ENCODE measurements at regions of chr3 and their contacts with region 1.

Region 1: DNA sequence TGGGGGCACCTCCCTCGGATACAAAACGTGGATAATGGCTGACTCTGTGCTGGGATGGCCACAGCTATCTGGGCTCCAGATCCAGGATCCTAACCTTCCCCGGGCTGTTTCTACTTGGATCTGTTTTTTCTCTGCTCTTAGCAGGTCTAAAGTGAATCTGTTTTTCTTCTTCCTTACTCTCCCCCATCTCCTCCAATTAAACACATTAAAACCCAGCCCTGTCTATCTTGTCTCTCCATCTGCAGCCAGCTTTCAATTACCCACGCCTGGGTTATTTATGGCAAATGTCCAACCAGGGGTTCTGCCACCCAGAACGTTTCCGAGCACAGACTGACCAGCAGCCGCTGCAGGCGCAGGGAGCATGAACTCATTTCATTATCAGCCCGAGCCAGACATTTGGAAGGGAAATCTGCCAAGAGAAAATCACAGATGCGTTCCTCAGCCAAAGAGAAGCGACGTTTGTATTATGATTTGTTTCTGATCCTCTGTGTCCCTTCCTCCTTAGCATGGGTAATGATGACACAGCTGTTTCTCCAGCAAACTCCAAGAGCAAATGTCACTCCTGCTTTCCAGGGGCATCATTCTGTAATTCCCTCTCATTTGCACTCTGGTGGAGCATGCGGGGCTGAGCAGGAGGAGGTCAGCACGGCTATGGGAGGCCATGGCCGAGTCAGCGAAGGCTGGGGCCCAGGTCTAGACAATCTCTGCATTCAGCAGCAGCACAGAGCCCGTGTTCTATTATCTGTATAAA is 42.0 kb downstream of the UMPS start:
- DNase-seq: peak in 4 of 5 donors; percentile 62 to 73 (median 66)
- ATAC-seq: peak; percentile 35 to 60 (median 49)
- H3K4me3 ChIP-seq: no peak overlapping the region
- H3K27ac ChIP-seq: peak overlapping the region; percentile 22 to 76 (median 70)
- H3K4me1 ChIP-seq: peaks cover 14 to 85% (median 59%) of the 10 kb centered on the region in 12 donors
- H3K27me3 ChIP-seq: no peaks in the 10 kb centered on the region
- CTCF ChIP-seq: no peak
- POLR2A ChIP-seq: no peak

Region 2: DNA sequence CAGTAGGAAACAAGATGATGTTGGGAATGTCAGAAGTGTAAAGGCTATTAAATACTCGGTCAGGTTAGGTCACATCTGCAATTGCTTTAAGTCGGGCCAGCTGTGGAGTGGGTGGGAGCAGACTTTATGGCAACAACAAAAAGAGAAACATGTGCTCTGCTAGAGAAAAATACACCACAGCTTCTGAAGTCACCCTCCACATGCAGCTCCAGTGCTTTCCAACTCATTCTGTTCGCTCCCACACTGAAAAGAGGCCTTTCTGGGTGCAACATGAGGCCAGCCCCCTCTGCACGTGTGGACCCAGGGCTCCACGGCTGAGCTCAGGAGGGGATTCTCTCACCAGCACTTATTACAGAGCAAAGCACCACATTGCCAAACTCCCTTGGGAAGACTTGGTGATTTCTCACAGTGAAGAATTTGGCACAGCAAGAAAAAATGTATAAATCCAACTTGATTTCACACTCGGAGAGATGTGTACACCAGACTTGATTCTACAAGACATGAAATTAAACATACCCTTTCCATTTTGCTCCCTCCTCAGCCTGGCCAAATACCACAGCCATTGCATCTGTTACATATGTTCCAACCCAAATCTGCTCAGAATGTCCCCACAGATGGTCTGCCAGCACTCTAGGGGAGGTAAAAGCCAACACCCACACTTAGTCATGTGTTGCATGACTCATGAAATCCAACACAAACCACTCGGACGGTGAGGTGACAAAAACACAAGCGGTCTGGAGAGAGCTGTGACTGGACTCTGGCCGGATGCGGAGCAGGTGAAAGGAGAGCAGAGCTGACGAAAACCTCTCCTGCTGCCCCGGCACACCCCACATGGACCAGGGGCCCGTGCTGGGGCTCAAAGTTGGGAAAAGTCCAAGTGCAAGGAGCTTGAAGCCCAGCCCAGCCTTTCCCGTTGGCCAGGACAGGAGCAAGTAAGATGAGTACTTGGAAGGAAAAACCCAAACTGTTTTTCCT is 40.3 kb after region 1 on chr3:
- intact Hi-C with region 1: loop called in 2 of 10 experiments (anchors 5 kb)
- DNase-seq: peak; percentile 71 to 83 (median 74)
- ATAC-seq: peak; percentile 83 to 91 (median 88)
- H3K4me3 ChIP-seq: no peak overlapping the region
- H3K27ac ChIP-seq: peak overlapping the region; percentile 16 to 93 (median 80)
- H3K4me1 ChIP-seq: peaks cover 0 to 67% (median 38%) of the 10 kb centered on the region in 12 donors
- H3K27me3 ChIP-seq: no peaks in the 10 kb centered on the region
- CTCF ChIP-seq: no peak
- POLR2A ChIP-seq: peak in 1 of 2 donors; percentile 26

Region 3: DNA sequence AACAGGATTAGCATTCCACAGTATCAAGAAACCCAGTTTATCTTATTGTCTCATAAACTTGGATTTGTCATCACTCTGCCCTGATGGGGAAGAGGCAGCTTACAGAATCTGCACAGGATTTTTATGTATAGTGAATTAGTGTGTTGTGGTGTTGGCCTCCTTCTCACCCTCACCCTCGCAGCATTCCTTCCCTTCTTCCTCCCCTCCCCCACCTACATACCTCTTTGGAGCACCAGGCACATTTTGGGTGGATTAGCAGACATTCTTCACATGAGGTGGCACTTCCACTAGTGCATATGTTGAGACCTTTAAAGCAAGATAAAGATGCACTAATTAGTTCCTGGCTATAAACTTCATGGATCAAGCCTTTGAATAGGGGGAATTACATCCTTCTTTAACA is 101.0 kb after region 1 on chr3:
- intact Hi-C with region 1: no loop called
- DNase-seq: no peak
- ATAC-seq: no peak
- H3K4me3 ChIP-seq: no peak overlapping the region
- H3K27ac ChIP-seq: no peak overlapping the region
- H3K4me1 ChIP-seq: peaks cover 1 to 48% (median 34%) of the 10 kb centered on the region in 12 donors
- H3K27me3 ChIP-seq: no peaks in the 10 kb centered on the region
- CTCF ChIP-seq: no peak
- POLR2A ChIP-seq: no peak

Region 4: DNA sequence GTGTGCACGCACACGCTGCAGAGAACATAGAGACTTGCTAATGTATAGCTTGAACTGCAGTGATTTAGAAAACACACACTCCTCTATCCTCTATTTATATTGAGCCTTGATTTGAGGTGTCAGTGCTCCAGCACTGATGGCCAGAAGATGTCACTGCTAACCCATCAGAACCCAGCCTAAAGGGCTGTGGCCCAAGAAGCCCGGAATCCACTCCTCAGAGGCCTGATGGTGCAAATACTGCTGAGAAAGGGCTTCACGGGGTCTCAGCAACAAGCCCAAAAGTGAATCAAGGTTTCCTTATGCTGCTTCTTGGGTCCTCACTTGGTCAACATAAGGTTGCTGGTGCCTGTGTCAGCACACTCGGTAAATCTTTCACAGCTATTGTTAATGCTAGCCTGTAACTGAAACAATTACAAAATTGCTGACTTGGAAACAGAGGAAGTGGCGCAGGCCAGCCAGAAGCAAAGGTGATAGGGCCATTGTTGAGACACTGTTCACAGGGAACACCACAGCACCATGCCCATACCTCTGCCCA is 223.3 kb after region 1 on chr3:
- intact Hi-C with region 1: no loop called
- DNase-seq: peak in 4 of 5 donors; percentile 35 to 73 (median 51)
- ATAC-seq: peak; percentile 53 to 76 (median 70)
- H3K4me3 ChIP-seq: no peak overlapping the region
- H3K27ac ChIP-seq: peak overlapping the region in 10 of 12 donors; percentile 8 to 74 (median 43)
- H3K4me1 ChIP-seq: peaks cover 5 to 80% (median 59%) of the 10 kb centered on the region in 12 donors
- H3K27me3 ChIP-seq: no peaks in the 10 kb centered on the region
- CTCF ChIP-seq: peak; percentile 56 to 84 (median 70)
- POLR2A ChIP-seq: no peak

Measured in heart left ventricle (tissue), 16 donors.